ENCODE measurements at regions of chr21 and their contacts with region 1.

Region 1: GRCh38 chr21:41283211-41283818 is 33.3 kb upstream of the FAM3B start:
- DNase-seq: no peak
- H3K4me3 ChIP-seq: no peak overlapping the region
- H3K27ac ChIP-seq: no peak overlapping the region
- H3K4me1 ChIP-seq: no peaks in the 10 kb centered on the region
- H3K27me3 ChIP-seq: no peaks in the 10 kb centered on the region
- CTCF ChIP-seq: peak in 2 of 3 experiments; percentile 61 to 77
- POLR2A ChIP-seq: no peak

Region 2: GRCh38 chr21:41338455-41338854 is 55.1 kb after region 1 on chr21:
- intact Hi-C with region 1: no loop called
- DNase-seq: no peak
- H3K4me3 ChIP-seq: no peak overlapping the region
- H3K27ac ChIP-seq: no peak overlapping the region
- H3K4me1 ChIP-seq: no peaks in the 10 kb centered on the region
- H3K27me3 ChIP-seq: no peaks in the 10 kb centered on the region
- CTCF ChIP-seq: no peak
- POLR2A ChIP-seq: no peak

Region 3: DNA sequence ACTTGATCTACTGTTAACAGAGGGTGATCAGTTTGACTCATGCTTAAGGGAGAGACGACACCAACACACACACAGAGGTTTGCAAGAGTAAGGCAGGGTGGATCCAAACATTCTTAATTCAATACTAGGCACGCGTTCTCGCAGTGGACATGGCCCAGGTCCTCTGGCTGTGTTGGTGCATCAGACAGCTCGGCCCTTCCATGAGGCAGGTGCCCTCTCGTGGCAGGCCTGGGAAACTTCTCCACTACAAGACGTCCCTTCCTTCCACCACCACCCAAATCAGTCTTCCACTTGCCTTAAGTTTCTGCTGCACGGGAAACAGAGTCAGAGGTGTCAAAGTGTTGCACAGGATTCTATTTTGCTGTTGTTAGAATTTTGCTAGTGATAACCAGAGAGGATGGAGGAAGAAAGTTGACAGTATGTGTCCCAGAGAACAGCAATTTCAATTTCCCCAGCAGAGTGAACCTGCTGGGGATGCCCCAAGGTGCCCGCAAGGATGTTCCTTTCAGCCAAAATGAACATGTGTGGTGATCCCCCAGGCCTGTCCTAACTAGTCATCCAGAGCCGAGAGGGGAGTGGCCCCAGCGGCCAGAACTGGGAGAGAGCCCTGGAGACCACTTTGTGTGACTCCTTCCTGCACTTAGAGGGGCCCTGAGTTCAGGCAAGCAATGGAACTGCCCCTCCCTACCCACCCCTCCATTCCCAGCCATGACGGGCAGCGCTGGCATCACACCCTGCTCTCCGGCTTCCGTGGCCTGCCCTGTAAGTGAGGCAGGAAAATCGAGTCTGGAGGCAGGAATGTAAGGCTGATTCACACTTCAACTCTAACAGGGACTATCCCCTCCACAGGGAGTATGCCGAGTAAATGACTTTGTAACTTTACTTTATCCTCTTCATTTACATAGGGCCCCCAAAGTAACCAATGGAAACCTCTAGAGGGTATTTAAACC is 177.5 kb after region 1 on chr21:
- intact Hi-C with region 1: loop called (anchors 10 kb)
- DNase-seq: no peak
- H3K4me3 ChIP-seq: no peak overlapping the region
- H3K27ac ChIP-seq: no peak overlapping the region
- H3K4me1 ChIP-seq: peaks cover 7% of the 10 kb centered on the region
- H3K27me3 ChIP-seq: no peaks in the 10 kb centered on the region
- CTCF ChIP-seq: peak; percentile 56 to 81 (median 79)
- POLR2A ChIP-seq: no peak

Measured in vagina (tissue), 2 donors.